MCF 10A (cell line): ENCODE measurements at regions of chr7 and their contacts with region 1.

Region 1: GRCh38 chr7:114663502-114663901 is 248.9 kb downstream of the FOXP2 start:
- DNase-seq: peak; percentile 35
- H3K4me3 Mint-ChIP-seq: no peak overlapping the region
- H3K27ac Mint-ChIP-seq: no peak overlapping the region
- H3K4me1 Mint-ChIP-seq: no peaks in the 10 kb centered on the region
- H3K27me3 Mint-ChIP-seq: peaks cover 49% of the 10 kb centered on the region
- CTCF ChIP-seq: peak; percentile 18

Region 2: GRCh38 chr7:114426382-114427223 is 236.9 kb before region 1 on chr7:
- CTCF ChIA-PET with region 1: interaction called, 3 read pairs
- POLR2A ChIA-PET with region 1: no interaction called
- intact Hi-C with region 1: loop called (anchors 1 kb)
- DNase-seq: peak; percentile 14
- H3K4me3 Mint-ChIP-seq: no peak overlapping the region
- H3K27ac Mint-ChIP-seq: no peak overlapping the region
- H3K4me1 Mint-ChIP-seq: no peaks in the 10 kb centered on the region
- H3K27me3 Mint-ChIP-seq: peaks cover 78% of the 10 kb centered on the region
- CTCF ChIP-seq: peak; percentile 34